ENCODE measurements at regions of chr10 and their contacts with region 1.

Region 1: DNA sequence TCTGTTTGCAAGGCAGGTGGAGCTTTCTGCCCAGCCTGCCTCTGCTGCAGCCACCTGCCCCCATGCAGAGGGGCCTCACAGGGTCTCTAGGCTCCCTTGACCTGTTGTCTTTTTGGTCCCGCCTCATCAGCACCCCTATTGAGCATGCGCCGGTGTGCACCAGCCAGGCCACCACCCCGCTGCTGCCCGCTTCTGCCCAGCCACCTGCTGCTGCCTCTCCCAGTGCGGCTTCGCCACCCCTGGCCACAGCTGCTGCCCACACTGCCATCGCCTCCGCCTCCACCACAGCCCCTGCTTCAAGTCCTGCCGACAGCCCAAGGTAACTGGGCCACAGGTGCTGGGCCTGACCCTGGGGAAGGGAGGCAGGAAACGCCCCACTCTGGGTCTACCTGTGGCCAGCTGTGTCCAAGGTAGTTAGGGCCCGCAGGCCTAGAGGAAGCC is 38.1 kb downstream of the LDB3 start:
- DNase-seq: no peak
- CTCF ChIP-seq: no peak

Region 2: GRCh38 chr10:86234551-86235270 is 471.7 kb before region 1 on chr10:
- in situ Hi-C with region 1: no loop called
- DNase-seq: no peak
- CTCF ChIP-seq: no peak

Region 3: DNA sequence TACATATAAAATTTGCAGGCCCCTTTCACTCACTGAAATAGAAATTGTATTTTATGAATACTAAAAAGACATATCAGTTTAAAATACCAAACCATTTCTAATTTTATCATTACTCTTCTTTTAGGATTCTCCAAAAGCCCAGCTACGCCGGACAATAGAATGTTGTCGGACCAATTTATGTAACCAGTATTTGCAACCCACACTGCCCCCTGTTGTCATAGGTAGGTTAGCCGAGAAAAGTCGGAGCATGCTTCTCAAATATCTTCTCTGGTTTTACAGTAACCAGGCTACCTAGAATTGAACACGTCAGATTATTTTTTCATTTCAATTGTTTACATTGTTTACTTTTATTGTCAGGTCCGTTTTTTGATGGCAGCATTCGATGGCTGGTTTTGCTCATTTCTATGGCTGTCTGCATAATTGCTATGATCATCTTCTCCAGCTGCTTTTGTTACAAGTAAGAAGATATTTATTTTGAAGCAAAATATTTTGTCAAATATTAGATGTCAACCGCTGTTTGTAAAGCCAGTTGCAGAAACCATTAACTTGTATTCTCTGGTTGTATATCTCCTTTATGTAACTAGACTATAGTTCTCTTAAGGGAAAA is 193.4 kb after region 1 on chr10:
- in situ Hi-C with region 1: loop called (anchors 5 kb)
- DNase-seq: peak; percentile 59
- CTCF ChIP-seq: peak; percentile 58